Mammary epithelial cell (primary cell): ENCODE measurements at regions of chr5 and their contacts with region 1.

Region 1: DNA sequence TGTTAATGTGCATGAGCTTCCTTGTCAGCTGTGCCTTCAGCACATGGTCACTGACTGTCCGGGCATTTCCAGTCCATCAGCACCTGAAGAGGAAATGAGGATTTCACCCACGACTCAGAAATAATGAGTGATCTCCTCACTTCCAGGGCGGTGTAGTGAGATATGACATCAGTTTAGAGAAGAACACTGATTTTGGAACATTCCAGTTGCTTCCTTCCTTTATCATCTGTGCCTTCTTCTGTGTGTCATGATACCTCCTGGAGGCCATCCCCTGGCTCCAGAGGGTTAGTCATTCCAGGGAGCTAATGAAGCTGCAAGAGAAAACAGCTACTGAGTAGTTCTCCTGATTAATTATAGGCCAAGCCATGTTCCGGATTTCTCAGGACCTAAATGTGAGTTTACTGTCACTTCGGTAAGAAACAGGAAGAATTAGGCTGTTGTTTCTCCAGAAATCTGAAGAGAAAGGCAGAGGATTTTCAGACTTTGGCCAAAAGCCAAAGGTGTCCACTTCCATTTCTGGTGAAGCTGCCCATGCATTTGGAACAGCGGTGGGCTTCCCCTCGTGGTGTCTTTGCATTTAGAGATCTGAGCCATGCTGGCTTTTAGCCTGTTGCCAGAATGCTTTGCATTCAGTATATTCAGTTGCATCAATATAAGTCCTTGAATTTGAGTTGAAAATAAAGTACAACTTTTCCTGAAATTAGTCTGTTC is 161.3 kb upstream of the OTULINL start:
- DNase-seq: peak; percentile 37
- H3K4me3 ChIP-seq: no peak overlapping the region
- H3K27ac ChIP-seq: no peak overlapping the region
- H3K4me1 ChIP-seq: peaks cover 20% of the 10 kb centered on the region
- H3K27me3 ChIP-seq: no peaks in the 10 kb centered on the region
- CTCF ChIP-seq: no peak

Region 2: DNA sequence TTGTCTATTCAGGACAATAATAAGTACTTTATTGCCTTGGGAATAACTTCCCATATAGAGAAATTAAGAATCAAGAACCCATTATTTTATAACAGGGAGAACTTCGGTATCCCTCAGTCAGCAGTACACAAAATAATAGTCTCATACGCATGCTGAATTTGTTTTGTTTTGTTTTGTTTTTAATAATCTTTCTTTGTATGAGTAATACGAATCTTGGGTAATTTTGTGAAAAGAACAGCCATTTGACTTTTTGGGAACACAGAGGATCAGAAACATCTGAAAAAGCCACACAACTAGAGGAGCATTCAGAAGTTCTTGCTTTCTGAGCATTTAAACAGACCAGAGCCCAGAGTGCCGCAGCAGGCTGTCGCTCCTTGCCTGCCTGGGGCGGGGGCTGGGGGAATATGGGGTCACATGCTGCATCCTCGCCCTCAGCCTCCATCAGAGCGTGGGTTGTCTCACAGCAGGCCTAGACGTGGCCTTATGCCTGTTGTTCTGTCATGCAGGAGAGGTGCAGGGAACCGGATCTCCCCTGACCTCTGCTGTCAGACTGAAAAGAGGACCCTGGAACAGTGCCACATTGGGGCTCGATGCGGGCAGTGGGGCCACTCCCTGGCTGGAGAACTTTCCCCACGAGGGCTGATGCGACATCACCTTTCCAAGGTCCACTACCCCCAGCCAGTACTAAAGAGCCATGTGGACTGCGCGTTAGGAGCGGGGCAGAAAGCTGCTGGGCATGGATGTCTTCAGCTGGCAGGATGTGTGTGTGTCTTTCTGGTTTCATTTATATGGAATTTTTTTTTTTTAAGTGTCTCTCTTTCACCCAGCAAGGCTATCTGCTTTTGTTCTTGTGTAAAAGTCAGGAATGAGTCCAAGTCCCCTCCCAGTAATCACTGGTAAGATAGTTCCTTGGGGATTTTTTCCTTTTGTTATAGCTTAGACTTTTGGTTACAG is 28.0 kb after region 1 on chr5:
- CTCF ChIA-PET with region 1: no interaction called
- dilution Hi-C with region 1: no loop called
- in situ Hi-C with region 1: no loop called
- intact Hi-C with region 1: no loop called
- DNase-seq: no peak
- H3K4me3 ChIP-seq: no peak overlapping the region
- H3K27ac ChIP-seq: no peak overlapping the region
- H3K4me1 ChIP-seq: peaks cover 18% of the 10 kb centered on the region
- H3K27me3 ChIP-seq: no peaks in the 10 kb centered on the region
- CTCF ChIP-seq: no peak

Region 3: GRCh38 chr5:14476786-14477435 is 56.7 kb after region 1 on chr5:
- CTCF ChIA-PET with region 1: no interaction called
- dilution Hi-C with region 1: no loop called
- in situ Hi-C with region 1: no loop called
- intact Hi-C with region 1: loop called (anchors 1 kb)
- DNase-seq: peak; percentile 79
- H3K4me3 ChIP-seq: no peak overlapping the region
- H3K27ac ChIP-seq: peak overlapping the region; percentile 71
- H3K4me1 ChIP-seq: peaks cover 34% of the 10 kb centered on the region
- H3K27me3 ChIP-seq: no peaks in the 10 kb centered on the region
- CTCF ChIP-seq: no peak

Region 4: GRCh38 chr5:14534773-14535172 is 114.5 kb after region 1 on chr5:
- CTCF ChIA-PET with region 1: no interaction called
- dilution Hi-C with region 1: no loop called
- in situ Hi-C with region 1: no loop called
- intact Hi-C with region 1: no loop called
- DNase-seq: no peak
- H3K4me3 ChIP-seq: no peak overlapping the region
- H3K27ac ChIP-seq: no peak overlapping the region
- H3K4me1 ChIP-seq: no peaks in the 10 kb centered on the region
- H3K27me3 ChIP-seq: no peaks in the 10 kb centered on the region
- CTCF ChIP-seq: no peak